IMR-90 (cell line): ENCODE measurements at regions of chr11 and their contacts with region 1.

Region 1: GRCh38 chr11:94987378-94987777 is 13.9 kb downstream of the KDM4D start:
- DNase-seq: no peak
- ATAC-seq: no peak
- H3K4me3 ChIP-seq: no peak overlapping the region
- H3K27ac ChIP-seq: no peak overlapping the region
- H3K4me1 ChIP-seq: no peaks in the 10 kb centered on the region
- H3K27me3 ChIP-seq: peaks cover 5% of the 10 kb centered on the region; the same call in 1 of the 2 replicates
- CTCF ChIP-seq: no peak
- POLR2A ChIP-seq: no peak
- RAD21 ChIP-seq: no peak

Region 2: DNA sequence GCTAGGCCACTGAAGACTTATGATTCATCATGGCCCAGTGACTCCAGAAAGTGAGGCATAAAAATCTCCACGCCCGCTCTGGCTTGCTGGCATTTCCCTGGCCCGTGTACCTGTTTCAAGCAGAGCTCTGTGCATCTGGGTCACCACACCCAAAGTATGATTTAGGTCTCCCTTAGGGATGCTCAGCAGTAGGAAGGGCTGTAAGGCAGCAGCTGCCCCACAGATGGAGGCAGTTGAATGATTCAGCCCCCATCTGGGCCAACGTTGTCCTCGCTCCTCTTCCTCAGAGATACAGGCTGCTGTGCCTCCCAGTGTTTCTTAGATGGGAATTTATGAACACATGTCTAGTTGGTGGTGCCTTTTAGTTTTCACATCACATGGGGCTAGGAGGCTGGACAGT is 607.8 kb before region 1 on chr11:
- CTCF ChIA-PET with region 1: no interaction called
- POLR2A ChIA-PET with region 1: no interaction called
- dilution Hi-C with region 1: no loop called
- in situ Hi-C with region 1: no loop called
- intact Hi-C with region 1: no loop called
- DNase-seq: no peak
- ATAC-seq: no peak
- H3K4me3 ChIP-seq: no peak overlapping the region
- H3K27ac ChIP-seq: no peak overlapping the region
- H3K4me1 ChIP-seq: no peaks in the 10 kb centered on the region
- H3K27me3 ChIP-seq: no peaks in the 10 kb centered on the region; the same call in 1 of the 2 replicates
- CTCF ChIP-seq: no peak
- POLR2A ChIP-seq: no peak
- RAD21 ChIP-seq: no peak

Region 3: GRCh38 chr11:94494126-94494715 is 493.2 kb before region 1 on chr11:
- CTCF ChIA-PET with region 1: no interaction called
- POLR2A ChIA-PET with region 1: no interaction called
- dilution Hi-C with region 1: no loop called
- in situ Hi-C with region 1: no loop called
- intact Hi-C with region 1: no loop called
- DNase-seq: no peak
- ATAC-seq: peak; percentile 65
- H3K4me3 ChIP-seq: peak overlapping the region; percentile 77
- H3K27ac ChIP-seq: peak overlapping the region; percentile 60
- H3K4me1 ChIP-seq: no peaks in the 10 kb centered on the region
- H3K27me3 ChIP-seq: no peaks in the 10 kb centered on the region
- CTCF ChIP-seq: no peak
- POLR2A ChIP-seq: no peak
- RAD21 ChIP-seq: no peak

Region 4: GRCh38 chr11:94958121-94958696 is 29.2 kb before region 1 on chr11:
- CTCF ChIA-PET with region 1: interaction called, 3 read pairs
- POLR2A ChIA-PET with region 1: interaction called, 12 read pairs
- dilution Hi-C with region 1: no loop called
- in situ Hi-C with region 1: no loop called
- intact Hi-C with region 1: no loop called
- DNase-seq: peak; percentile 66
- ATAC-seq: peak; percentile 95
- H3K4me3 ChIP-seq: no peak overlapping the region
- H3K27ac ChIP-seq: peak overlapping the region; percentile 80
- H3K4me1 ChIP-seq: peaks cover 5% of the 10 kb centered on the region
- H3K27me3 ChIP-seq: no peaks in the 10 kb centered on the region
- CTCF ChIP-seq: no peak
- POLR2A ChIP-seq: no peak
- RAD21 ChIP-seq: no peak